Endothelial cell of umbilical vein (primary cell): ENCODE measurements at regions of chr10 and their contacts with region 1.

Region 1: GRCh38 chr10:9209105-9209798 is 1154.8 kb downstream of the GATA3 start:
- DNase-seq: peak; percentile 82
- H3K4me3 ChIP-seq: no peak overlapping the region
- H3K27ac ChIP-seq: no peak overlapping the region
- H3K4me1 ChIP-seq: peaks cover 2% of the 10 kb centered on the region
- H3K27me3 ChIP-seq: no peaks in the 10 kb centered on the region
- CTCF ChIP-seq: peak; percentile 79 to 84
- POLR2A ChIP-seq: no peak

Region 2: DNA sequence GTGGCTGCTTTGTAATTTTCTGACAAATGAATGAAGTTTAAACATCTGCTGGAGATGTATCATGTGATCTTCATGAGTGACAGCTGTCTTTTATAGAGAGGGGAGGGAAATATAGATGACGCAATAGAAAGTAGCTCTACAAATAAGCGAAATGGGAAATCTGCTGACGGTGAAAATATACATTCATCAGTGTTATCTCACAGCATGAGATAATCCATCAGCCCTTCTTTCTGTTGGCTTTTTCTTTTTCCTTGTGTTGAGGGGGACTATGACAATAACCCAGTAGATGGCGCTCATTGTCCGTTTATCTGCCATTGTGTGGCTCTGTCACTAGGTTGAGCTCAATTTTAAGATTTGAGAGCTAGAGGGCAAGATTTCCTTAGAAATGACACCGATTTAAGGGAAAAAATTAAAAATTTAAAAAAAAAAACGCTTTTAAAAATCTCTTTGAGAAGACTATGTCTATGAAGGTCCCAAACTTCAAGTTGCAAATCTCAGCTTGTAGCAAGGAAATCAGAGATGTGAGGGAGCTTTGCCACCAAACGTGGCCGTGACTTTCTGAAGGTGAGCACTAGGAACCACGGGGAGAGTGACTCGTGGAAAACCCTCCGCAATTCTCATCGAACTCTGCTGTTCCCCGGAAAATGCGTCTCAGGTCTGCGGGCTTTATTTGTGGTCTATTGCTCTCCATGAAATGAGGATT is 1683.8 kb before region 1 on chr10:
- CTCF ChIA-PET with region 1: interaction called, 32 read pairs
- POLR2A ChIA-PET with region 1: no interaction called
- dilution Hi-C with region 1: no loop called
- intact Hi-C with region 1: loop called (anchors 5 kb)
- DNase-seq: peak; percentile 62
- H3K4me3 ChIP-seq: no peak overlapping the region
- H3K27ac ChIP-seq: no peak overlapping the region
- H3K4me1 ChIP-seq: no peaks in the 10 kb centered on the region
- H3K27me3 ChIP-seq: no peaks in the 10 kb centered on the region
- CTCF ChIP-seq: peak; percentile 54 to 59
- POLR2A ChIP-seq: no peak

Region 3: GRCh38 chr10:7756360-7756992 is 1452.8 kb before region 1 on chr10:
- CTCF ChIA-PET with region 1: interaction called, 25 read pairs
- POLR2A ChIA-PET with region 1: no interaction called
- dilution Hi-C with region 1: no loop called
- intact Hi-C with region 1: no loop called
- DNase-seq: peak; percentile 52
- H3K4me3 ChIP-seq: no peak overlapping the region
- H3K27ac ChIP-seq: no peak overlapping the region
- H3K4me1 ChIP-seq: no peaks in the 10 kb centered on the region
- H3K27me3 ChIP-seq: no peaks in the 10 kb centered on the region
- CTCF ChIP-seq: peak; percentile 48 to 70
- POLR2A ChIP-seq: no peak

Region 4: DNA sequence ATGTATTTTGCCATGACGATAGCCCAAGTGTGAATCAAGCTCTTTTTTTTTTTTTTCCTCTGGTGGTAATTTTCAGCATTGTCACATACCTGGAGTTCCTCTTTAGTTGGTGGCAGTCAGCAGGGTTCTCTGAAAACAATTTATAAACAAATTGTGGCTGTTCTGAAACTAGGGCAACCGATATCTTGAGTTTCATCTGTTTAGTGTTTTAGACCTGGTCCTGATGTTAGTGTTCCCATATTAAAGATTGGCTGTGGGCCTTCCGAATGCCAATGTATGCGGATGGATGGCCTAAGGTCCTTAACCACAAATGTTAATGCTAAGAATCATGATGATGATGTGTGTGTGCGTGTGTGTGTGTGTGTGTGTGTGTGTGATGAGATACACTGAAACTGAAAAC is 441.6 kb before region 1 on chr10:
- CTCF ChIA-PET with region 1: no interaction called
- POLR2A ChIA-PET with region 1: no interaction called
- dilution Hi-C with region 1: no loop called
- intact Hi-C with region 1: loop called (anchors 10 kb)
- DNase-seq: no peak
- H3K4me3 ChIP-seq: no peak overlapping the region
- H3K27ac ChIP-seq: no peak overlapping the region
- H3K4me1 ChIP-seq: no peaks in the 10 kb centered on the region
- H3K27me3 ChIP-seq: no peaks in the 10 kb centered on the region
- CTCF ChIP-seq: no peak
- POLR2A ChIP-seq: no peak

Region 5: GRCh38 chr10:9018195-9019173 is 190.8 kb before region 1 on chr10:
- CTCF ChIA-PET with region 1: no interaction called
- POLR2A ChIA-PET with region 1: no interaction called
- dilution Hi-C with region 1: no loop called
- intact Hi-C with region 1: loop called (anchors 2 kb)
- DNase-seq: peak; percentile 91
- H3K4me3 ChIP-seq: no peak overlapping the region
- H3K27ac ChIP-seq: peak overlapping the region; percentile 45
- H3K4me1 ChIP-seq: peaks cover 15% of the 10 kb centered on the region
- H3K27me3 ChIP-seq: no peaks in the 10 kb centered on the region
- CTCF ChIP-seq: no peak
- POLR2A ChIP-seq: no peak

Region 6: DNA sequence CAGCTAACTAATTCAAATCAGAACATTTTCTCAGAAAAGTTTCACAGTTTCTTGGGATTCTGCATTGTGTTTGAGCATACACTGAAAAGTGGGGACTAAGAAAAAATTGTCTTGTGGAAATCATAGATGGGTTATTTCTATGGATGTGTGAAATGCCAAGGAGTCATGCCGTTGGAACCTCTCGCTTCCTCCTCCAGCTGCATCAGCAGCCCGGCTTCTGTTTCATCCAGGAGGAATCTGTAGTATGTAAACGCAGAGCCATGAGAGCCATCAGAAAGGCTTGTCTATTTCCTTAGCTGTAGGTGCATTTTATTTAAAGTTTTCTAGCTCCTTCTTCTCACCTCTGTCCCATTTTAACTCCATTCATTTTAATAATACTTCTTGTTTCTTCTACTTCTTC is 10.6 kb before region 1 on chr10:
- CTCF ChIA-PET with region 1: interaction called, 24 read pairs
- POLR2A ChIA-PET with region 1: no interaction called
- dilution Hi-C with region 1: no loop called
- intact Hi-C with region 1: no loop called
- DNase-seq: no peak
- H3K4me3 ChIP-seq: no peak overlapping the region
- H3K27ac ChIP-seq: no peak overlapping the region
- H3K4me1 ChIP-seq: no peaks in the 10 kb centered on the region
- H3K27me3 ChIP-seq: no peaks in the 10 kb centered on the region
- CTCF ChIP-seq: no peak
- POLR2A ChIP-seq: no peak

Region 7: GRCh38 chr10:9342885-9343570 is 133.8 kb after region 1 on chr10:
- CTCF ChIA-PET with region 1: no interaction called
- POLR2A ChIA-PET with region 1: no interaction called
- dilution Hi-C with region 1: no loop called
- intact Hi-C with region 1: no loop called
- DNase-seq: peak; percentile 42
- H3K4me3 ChIP-seq: no peak overlapping the region
- H3K27ac ChIP-seq: no peak overlapping the region
- H3K4me1 ChIP-seq: no peaks in the 10 kb centered on the region
- H3K27me3 ChIP-seq: no peaks in the 10 kb centered on the region
- CTCF ChIP-seq: peak; percentile 48 to 59
- POLR2A ChIP-seq: no peak